AG04449 (cell line): ENCODE measurements at regions of chr3 and their contacts with region 1.

Region 1: DNA sequence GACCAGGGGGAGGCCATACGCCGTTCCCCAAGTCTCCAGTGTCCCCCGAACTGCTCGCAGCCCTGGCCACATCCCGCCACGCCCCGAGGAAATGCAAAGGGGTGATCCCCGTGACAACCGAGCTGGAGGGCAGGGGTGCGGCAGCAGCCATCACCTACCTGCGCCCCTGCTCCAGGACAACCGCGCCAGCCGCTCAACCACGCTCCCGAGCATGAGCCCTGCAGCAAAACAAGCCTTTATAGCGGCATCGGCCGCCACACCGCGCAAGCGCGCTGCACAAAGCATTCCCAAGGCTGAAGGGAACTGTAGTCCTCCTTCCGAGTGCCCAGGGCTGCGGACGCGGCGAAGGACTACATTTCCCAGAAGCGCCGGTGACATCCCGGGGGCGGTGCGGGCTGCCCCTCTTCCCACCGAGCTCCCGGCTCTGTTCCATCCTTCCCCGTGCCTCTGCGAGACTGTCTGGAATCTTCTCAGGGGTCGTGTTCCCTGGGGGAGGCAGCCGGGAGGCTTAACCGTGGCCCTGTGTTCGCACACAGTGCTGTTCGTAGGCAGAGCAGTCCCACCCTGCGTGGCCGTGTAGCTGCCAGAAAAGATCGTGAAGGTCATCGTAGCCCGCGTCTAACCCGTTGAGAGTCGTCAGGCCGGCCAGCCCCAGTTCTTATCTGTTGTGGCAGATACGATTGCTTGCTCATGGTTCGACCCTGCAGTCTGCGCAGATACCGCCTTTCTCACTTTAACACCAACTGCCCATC is at the start of gene ABCC5:
- DNase-seq: peak; percentile 41
- H3K4me3 ChIP-seq: peak within 1 kb of the TSS; percentile 98
- CTCF ChIP-seq: no peak

Region 2: DNA sequence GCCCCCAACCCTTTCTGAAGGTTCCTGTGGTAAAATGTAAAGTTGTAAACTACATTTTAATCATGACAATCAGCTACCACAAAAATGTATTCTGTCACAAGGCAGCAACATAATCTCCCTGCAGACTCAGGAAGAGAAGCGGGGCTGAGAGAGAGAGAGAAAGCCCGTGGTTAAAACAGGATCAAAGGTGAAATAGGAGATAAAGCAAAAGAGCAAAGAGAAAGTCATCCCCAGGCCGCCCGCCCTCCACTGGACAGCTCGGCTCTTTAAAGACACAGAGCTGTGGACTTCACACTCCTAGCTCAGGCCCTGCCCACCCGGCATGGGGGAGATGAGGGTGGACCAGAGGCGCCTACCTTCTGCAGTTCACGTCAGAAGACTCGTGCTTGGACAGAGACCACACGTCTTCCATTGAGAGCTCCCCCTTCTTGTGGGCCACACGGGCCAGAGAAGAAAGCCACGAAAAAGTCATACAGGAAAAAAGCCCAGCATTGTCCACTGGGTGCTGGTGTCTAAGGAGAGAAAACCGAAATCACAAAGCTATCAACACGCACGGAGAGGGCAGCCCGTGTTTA is 29.5 kb before region 1 on chr3:
- CTCF ChIA-PET with region 1: interaction called, 20 read pairs
- POLR2A ChIA-PET with region 1: no interaction called
- DNase-seq: peak; percentile 38
- H3K4me3 ChIP-seq: no peak overlapping the region
- CTCF ChIP-seq: no peak

Region 3: DNA sequence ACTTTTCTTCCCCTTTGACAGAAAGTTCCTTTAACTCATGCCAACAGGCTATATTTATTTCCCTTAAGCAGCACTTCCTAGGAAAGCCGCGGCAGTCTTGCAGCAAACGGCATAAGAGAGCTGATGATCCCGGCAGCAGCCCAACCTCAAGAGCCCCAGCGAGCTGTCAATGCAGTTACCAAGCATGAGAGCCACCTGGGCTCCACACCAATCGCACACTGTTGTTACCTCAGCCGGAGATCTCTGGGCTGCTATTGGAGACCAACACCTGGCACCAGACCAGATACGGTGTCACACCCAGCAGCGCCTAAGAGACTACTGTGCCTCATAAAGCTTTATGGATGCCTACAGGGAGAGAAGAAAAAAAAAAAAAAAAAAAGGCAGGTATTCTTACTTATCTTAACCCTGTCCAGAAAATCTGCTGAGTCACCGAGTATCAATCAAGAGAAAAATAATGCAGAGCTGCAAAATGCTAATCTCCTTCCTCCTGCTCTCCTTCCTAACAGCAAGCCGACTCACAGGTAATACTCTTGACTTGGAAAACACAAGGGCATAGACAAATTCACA is 11.8 kb before region 1 on chr3:
- CTCF ChIA-PET with region 1: interaction called, 27 read pairs
- POLR2A ChIA-PET with region 1: interaction called, 7 read pairs
- DNase-seq: no peak
- H3K4me3 ChIP-seq: no peak overlapping the region
- CTCF ChIP-seq: no peak